ENCODE measurements at regions of chr3 and their contacts with region 1.

Region 1: GRCh38 chr3:194265483-194265892 is 85.6 kb downstream of the CPN2 start:
- DNase-seq: peak; percentile 96 to 97 (median 97)
- ATAC-seq: peak; percentile 83 to 84
- H3K4me3 ChIP-seq: no peak overlapping the region
- H3K27ac ChIP-seq: peak overlapping the region; percentile 82
- H3K4me1 ChIP-seq: peaks cover 11% of the 10 kb centered on the region
- H3K27me3 ChIP-seq: no peaks in the 10 kb centered on the region

Region 2: GRCh38 chr3:193400304-193400703 is 865.2 kb before region 1 on chr3:
- intact Hi-C with region 1: no loop called
- DNase-seq: no peak
- ATAC-seq: no peak
- H3K4me3 ChIP-seq: no peak overlapping the region
- H3K27ac ChIP-seq: no peak overlapping the region
- H3K4me1 ChIP-seq: no peaks in the 10 kb centered on the region
- H3K27me3 ChIP-seq: no peaks in the 10 kb centered on the region

Region 3: DNA sequence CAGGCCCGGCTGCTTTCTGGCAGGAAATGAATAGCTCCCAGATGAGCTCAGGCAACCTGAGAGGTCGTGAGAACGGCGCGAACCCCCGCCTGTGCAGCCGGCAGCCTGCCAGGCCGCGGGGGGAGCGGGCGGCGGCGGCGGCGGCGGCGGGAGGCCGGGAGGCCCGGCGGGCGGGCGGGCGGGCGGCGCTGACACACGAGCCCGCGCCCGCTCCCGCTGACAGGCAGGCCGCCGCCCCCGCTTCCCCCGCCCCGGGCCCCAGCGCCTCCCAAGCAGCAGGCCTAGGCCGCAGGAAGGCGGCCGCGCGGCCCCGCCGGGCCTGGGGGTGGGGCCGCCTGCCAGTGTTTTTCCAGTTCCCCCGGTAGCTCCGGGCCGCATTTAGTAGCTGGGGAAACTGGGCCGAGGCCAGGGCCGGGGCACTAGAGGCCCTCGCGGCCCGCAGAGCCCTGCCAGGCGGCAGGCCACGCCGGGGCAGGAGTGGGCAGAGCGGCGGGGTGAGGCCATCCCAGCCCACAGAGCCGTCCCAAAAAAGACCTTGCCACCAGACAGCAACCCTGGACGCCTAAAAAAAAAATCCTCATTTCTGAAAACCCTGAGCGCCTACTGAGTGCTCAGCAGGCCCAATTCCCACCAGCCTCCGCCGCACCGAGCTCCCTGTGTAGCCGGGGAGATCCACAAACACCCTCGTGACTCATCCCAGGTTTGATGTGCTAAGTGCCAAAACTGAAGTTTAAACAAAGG is 123.9 kb before region 1 on chr3:
- intact Hi-C with region 1: loop called in 3 of 4 experiments (anchors 2 to 5 kb)
- DNase-seq: peak; percentile 95 to 97 (median 97)
- ATAC-seq: peak; percentile 85 to 91
- H3K4me3 ChIP-seq: peak overlapping the region; percentile 70
- H3K27ac ChIP-seq: peak overlapping the region; percentile 98
- H3K4me1 ChIP-seq: peaks cover 11% of the 10 kb centered on the region
- H3K27me3 ChIP-seq: no peaks in the 10 kb centered on the region

Region 4: GRCh38 chr3:194306109-194306686 is 40.7 kb after region 1 on chr3:
- intact Hi-C with region 1: loop called in 1 of 4 experiments (anchors 5 kb)
- DNase-seq: peak in 1 of 3 donors; percentile 44
- ATAC-seq: peak in 1 of 2 donors; percentile 7
- H3K4me3 ChIP-seq: no peak overlapping the region
- H3K27ac ChIP-seq: no peak overlapping the region
- H3K4me1 ChIP-seq: no peaks in the 10 kb centered on the region
- H3K27me3 ChIP-seq: no peaks in the 10 kb centered on the region

Region 5: GRCh38 chr3:194489736-194490612 is 224.5 kb after region 1 on chr3:
- intact Hi-C with region 1: no loop called
- DNase-seq: no peak
- ATAC-seq: no peak
- H3K4me3 ChIP-seq: no peak overlapping the region
- H3K27ac ChIP-seq: no peak overlapping the region
- H3K4me1 ChIP-seq: peaks cover 4% of the 10 kb centered on the region
- H3K27me3 ChIP-seq: no peaks in the 10 kb centered on the region

Region 6: GRCh38 chr3:194540274-194540905 is 274.9 kb after region 1 on chr3:
- intact Hi-C with region 1: no loop called
- DNase-seq: peak; percentile 72 to 88 (median 79)
- ATAC-seq: peak; percentile 80 to 82
- H3K4me3 ChIP-seq: no peak overlapping the region
- H3K27ac ChIP-seq: peak overlapping the region; percentile 26
- H3K4me1 ChIP-seq: peaks cover 4% of the 10 kb centered on the region
- H3K27me3 ChIP-seq: no peaks in the 10 kb centered on the region

Measured in right cardiac atrium (tissue), 5 donors.